GM10248 (cell line): ENCODE measurements at regions of chr2 and their contacts with region 1.

Region 1: GRCh38 chr2:109545828-109546713 is 67.7 kb downstream of the SEPTIN10 start:
- DNase-seq: peak; percentile 40
- CTCF ChIP-seq: peak; percentile 89

Region 2: GRCh38 chr2:109125593-109126500 is 420.2 kb before region 1 on chr2:
- CTCF ChIA-PET with region 1: no interaction called
- POLR2A ChIA-PET with region 1: no interaction called
- DNase-seq: no peak
- CTCF ChIP-seq: no peak

Region 3: GRCh38 chr2:109322111-109322510 is 224.0 kb before region 1 on chr2:
- CTCF ChIA-PET with region 1: no interaction called
- POLR2A ChIA-PET with region 1: no interaction called
- DNase-seq: no peak
- CTCF ChIP-seq: no peak

Region 4: GRCh38 chr2:109516445-109517117 is 29.5 kb before region 1 on chr2:
- CTCF ChIA-PET with region 1: interaction called, 16 read pairs
- POLR2A ChIA-PET with region 1: no interaction called
- DNase-seq: peak; percentile 63
- CTCF ChIP-seq: peak; percentile 67

Region 5: GRCh38 chr2:109558076-109558882 is 12.2 kb after region 1 on chr2:
- CTCF ChIA-PET with region 1: interaction called, 22 read pairs
- POLR2A ChIA-PET with region 1: no interaction called
- DNase-seq: no peak
- CTCF ChIP-seq: no peak

Region 6: DNA sequence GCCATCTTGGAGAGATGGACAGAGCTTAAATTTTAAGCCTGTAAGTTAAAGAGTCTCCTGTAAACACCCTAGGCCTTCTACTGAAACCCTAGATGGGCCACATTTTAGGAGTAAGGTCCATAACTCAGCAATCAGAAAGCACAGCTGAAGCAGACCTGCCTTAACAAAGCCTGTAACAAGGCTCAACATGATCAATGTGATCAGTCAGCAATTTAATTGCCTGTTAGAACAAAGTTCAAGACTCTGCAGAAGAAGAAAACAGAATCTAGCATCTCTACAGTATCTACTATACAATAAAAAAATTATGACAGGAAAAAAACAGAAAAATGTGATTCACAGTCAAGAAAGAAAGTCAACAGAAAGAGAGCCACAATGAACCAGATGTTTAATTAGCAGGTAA is 40.6 kb after region 1 on chr2:
- CTCF ChIA-PET with region 1: interaction called, 10 read pairs
- POLR2A ChIA-PET with region 1: no interaction called
- DNase-seq: no peak
- CTCF ChIP-seq: no peak

Region 7: GRCh38 chr2:109715313-109715805 is 169.3 kb after region 1 on chr2:
- CTCF ChIA-PET with region 1: interaction called, 16 read pairs
- POLR2A ChIA-PET with region 1: interaction called, 10 read pairs
- DNase-seq: no peak
- CTCF ChIP-seq: peak; percentile 2